Cardiac septum (tissue), 1 donor: ENCODE measurements at regions of chr12 and their contacts with region 1.

Region 1: GRCh38 chr12:79983986-79984620 is 49.2 kb upstream of the PPP1R12A start:
- DNase-seq: no peak

Region 2: GRCh38 chr12:79897617-79898016 is 86.5 kb before region 1 on chr12:
- intact Hi-C with region 1: loop called (anchors 10 kb)
- DNase-seq: no peak